ENCODE measurements at regions of chr14 and their contacts with region 1.

Region 1: GRCh38 chr14:50773632-50774541 is 57.1 kb downstream of the NIN start:
- DNase-seq: peak; percentile 70
- H3K4me3 Mint-ChIP-seq: no peak overlapping the region
- H3K27ac Mint-ChIP-seq: peak overlapping the region; percentile 46
- H3K4me1 Mint-ChIP-seq: peaks cover 40% of the 10 kb centered on the region
- H3K27me3 Mint-ChIP-seq: no peaks in the 10 kb centered on the region
- CTCF ChIP-seq: peak; percentile 82

Region 2: DNA sequence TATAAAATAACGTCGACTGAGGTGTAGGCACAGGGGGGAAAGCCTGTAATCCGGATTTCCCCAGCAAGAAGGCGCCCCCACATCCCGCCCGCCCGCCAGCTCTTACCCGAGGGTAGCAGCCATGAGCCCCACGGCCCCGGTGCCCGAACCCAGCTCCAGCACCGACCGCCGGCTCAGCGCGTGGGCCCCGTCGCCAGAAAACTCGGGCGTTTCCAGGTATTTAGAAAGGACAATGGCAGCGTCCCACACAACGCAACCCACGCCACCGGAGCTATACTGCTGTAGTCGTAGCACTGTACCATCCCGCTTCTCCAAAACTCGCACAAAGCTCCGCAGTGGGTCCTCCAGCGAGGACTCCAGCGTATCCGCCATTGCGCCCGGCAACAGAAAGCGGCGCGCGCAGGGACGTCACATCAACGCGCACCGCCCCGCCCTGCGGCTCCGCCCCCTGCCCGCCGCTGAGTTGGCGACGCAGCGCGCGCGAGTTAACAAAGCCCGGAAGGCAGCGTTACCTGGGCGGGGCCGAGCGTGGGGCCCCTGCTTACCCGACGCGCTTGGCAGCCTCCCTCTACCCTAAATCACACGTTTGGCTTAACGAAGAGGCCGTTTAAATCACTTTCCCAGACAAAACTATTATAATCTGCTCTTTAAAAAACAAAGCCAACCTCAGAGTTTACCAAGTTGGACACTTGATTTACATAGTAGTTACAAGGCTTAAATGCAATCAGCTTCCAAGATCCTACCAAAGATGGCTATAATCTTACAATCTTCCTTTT is 657.5 kb before region 1 on chr14 and contains the start of gene VCPKMT:
- CTCF ChIA-PET with region 1: no interaction called
- POLR2A ChIA-PET with region 1: no interaction called
- intact Hi-C with region 1: no loop called
- DNase-seq: peak; percentile 90
- H3K4me3 Mint-ChIP-seq: peak within 1 kb of the TSS; percentile 93
- H3K27ac Mint-ChIP-seq: peak within 1 kb of the TSS; percentile 99
- H3K4me1 Mint-ChIP-seq: no peaks in the 10 kb centered on the region
- H3K27me3 Mint-ChIP-seq: no peaks in the 10 kb centered on the region
- CTCF ChIP-seq: no peak
- total RNA-seq, gene VCPKMT: 7.2 and 10.4 TPM in 2 replicates

Region 3: GRCh38 chr14:50321009-50321660 is 452.8 kb before region 1 on chr14:
- CTCF ChIA-PET with region 1: interaction called, 22 read pairs
- POLR2A ChIA-PET with region 1: interaction called, 5 read pairs
- intact Hi-C with region 1: loop called (anchors 2 kb)
- DNase-seq: peak; percentile 89
- H3K4me3 Mint-ChIP-seq: no peak overlapping the region
- H3K27ac Mint-ChIP-seq: no peak overlapping the region
- H3K4me1 Mint-ChIP-seq: no peaks in the 10 kb centered on the region
- H3K27me3 Mint-ChIP-seq: no peaks in the 10 kb centered on the region
- CTCF ChIP-seq: peak; percentile 61

Region 4: DNA sequence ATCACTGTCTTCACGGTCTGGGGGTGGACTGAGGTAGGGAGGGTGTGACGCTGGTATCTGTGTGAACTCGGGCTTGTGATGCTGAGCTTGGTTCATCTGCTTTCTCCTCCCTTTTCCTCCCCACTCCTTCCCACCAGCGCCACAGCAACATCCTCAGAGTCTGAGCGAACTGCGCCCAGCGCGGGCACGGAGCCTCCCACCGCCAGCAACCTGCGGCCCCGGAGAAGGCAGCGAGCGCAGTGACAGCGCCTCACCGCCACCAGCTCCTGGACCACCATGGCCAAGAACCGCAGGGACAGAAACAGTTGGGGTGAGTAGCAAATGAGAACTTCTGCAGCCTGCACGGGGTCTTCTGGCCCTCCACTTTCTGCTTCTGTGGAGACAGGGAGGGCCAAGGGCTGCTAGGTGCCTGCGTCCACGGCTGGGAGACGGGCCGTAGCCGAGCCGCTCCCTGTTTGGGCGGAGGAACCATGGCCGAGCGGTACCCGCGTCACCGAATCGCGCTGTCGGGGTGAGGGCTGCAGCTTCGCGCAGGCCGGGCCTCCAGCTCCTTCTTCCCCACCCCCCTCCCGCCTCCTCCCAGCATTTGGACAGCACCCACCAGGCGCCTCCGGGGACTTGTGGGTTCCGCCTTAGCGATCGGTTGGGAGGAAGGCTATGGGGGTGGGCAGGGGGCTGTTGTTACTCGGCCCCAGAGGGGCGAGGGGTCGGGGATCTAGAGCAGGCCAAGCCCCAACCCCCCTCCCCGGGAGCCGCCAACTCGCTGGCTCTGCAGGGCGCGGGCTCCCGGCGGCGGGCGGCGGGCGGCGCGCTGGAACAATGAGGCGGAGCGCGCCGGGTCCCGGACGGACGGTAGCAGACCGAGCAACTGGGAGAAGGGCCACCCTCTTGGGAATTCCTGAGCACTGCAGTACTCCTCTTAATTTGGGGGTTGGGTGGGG is 213.6 kb before region 1 on chr14 and contains the start of gene ATL1:
- CTCF ChIA-PET with region 1: interaction called, 11 read pairs
- POLR2A ChIA-PET with region 1: interaction called, 15 read pairs
- intact Hi-C with region 1: no loop called
- DNase-seq: peak; percentile 77
- H3K4me3 Mint-ChIP-seq: peak within 1 kb of the TSS; percentile 88
- H3K27ac Mint-ChIP-seq: peak within 1 kb of the TSS; percentile 93
- H3K4me1 Mint-ChIP-seq: peaks cover 10% of the 10 kb centered on the region
- H3K27me3 Mint-ChIP-seq: no peaks in the 10 kb centered on the region
- CTCF ChIP-seq: no peak
- total RNA-seq, gene ATL1: 3.2 and 3.3 TPM in 2 replicates

Region 5: DNA sequence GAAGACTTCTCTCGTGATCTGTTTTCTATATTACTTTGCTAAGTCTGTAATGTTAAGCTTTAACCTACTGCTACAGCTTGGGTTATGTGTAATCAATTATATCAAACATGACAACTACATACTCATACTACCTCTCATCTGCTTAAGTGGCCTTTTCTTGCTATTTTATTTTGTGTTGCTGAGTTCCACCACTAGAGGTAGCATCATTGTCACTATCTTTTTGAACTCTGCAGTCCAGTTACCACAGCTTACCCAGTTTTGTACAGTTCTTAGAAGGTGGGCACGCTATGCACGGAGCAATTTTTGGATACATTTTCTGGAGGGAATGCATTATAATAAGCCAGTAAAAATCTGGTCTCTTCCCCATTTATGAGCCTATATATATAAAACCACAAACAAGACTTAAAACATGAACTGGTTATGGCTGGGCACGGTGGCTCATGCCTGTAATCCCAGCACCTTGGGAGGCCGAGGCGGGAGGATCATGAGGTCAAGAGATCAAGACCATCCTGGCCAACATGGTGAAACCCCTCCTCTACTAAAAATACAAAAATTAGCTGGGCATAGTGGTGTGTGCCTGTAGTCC is 154.2 kb before region 1 on chr14:
- CTCF ChIA-PET with region 1: interaction called, 52 read pairs
- POLR2A ChIA-PET with region 1: interaction called, 10 read pairs
- intact Hi-C with region 1: loop called (anchors 1 kb)
- DNase-seq: peak; percentile 43
- H3K4me3 Mint-ChIP-seq: no peak overlapping the region
- H3K27ac Mint-ChIP-seq: no peak overlapping the region
- H3K4me1 Mint-ChIP-seq: peaks cover 7% of the 10 kb centered on the region
- H3K27me3 Mint-ChIP-seq: no peaks in the 10 kb centered on the region
- CTCF ChIP-seq: peak; percentile 57

Region 6: DNA sequence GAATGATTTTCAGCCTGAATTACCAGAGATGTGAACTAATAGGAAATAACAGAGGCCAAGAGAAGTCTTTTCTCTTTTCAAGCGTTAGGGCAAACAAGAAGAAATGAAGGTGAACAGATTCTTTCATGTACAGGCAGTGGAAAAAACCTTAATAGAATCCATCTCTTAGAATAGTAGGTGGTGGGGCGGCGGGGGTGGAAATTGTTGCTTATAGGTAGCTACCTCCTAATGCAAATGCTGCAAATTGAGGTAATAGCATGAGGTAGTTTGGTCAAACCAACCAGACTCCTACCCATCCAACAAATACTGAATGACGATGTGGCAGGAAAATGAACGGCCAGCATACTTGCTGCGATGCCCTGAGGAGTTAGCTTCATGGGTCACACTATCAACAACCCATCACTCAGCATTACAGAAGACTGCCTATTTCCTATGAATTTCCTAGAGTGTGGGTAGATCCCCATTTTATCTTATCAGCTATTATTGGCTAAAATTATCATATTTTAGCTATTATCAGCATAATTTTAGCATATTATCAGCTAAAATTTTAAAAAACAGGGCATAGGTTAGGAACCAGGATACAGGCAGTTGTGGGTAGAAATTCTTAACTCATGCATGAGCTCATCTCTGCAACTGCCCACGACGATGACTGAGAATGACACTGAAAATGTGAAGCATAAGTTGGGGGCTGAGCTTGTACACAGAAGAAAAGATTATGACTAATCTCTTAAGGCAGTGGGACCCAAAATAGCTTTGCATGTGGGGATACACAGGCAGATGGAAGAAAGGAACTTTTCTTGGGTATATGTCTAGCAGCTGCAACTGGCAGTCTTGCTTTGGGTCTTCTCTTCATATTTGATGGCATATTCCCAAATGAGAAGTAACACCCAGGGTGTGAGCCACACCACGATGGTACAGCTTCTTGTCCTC is 11.6 kb before region 1 on chr14:
- CTCF ChIA-PET with region 1: interaction called, 129 read pairs
- POLR2A ChIA-PET with region 1: interaction called, 15 read pairs
- intact Hi-C with region 1: no loop called
- DNase-seq: peak; percentile 50
- H3K4me3 Mint-ChIP-seq: no peak overlapping the region
- H3K27ac Mint-ChIP-seq: no peak overlapping the region
- H3K4me1 Mint-ChIP-seq: no peaks in the 10 kb centered on the region
- H3K27me3 Mint-ChIP-seq: no peaks in the 10 kb centered on the region
- CTCF ChIP-seq: no peak

Region 7: GRCh38 chr14:50792051-50792477 is 18.2 kb after region 1 on chr14:
- CTCF ChIA-PET with region 1: interaction called, 53 read pairs
- POLR2A ChIA-PET with region 1: interaction called, 4 read pairs
- intact Hi-C with region 1: no loop called
- DNase-seq: no peak
- H3K4me3 Mint-ChIP-seq: no peak overlapping the region
- H3K27ac Mint-ChIP-seq: no peak overlapping the region
- H3K4me1 Mint-ChIP-seq: no peaks in the 10 kb centered on the region
- H3K27me3 Mint-ChIP-seq: no peaks in the 10 kb centered on the region
- CTCF ChIP-seq: no peak